ENCODE measurements at regions of chr2 and their contacts with region 1.

Region 1: GRCh38 chr2:29841386-29842004 is 79.9 kb downstream of the ALK start:
- DNase-seq: peak in 3 of 9 donors; percentile 7 to 10 (median 8)
- ATAC-seq: peak; percentile 45
- H3K4me3 ChIP-seq: no peak overlapping the region
- H3K4me3 Mint-ChIP-seq: no peak overlapping the region
- H3K27ac ChIP-seq: no peak overlapping the region
- H3K27ac Mint-ChIP-seq: no peak overlapping the region
- H3K4me1 ChIP-seq: no peaks in the 10 kb centered on the region
- H3K4me1 Mint-ChIP-seq: no peaks in the 10 kb centered on the region
- H3K27me3 ChIP-seq: no peaks in the 10 kb centered on the region
- H3K27me3 Mint-ChIP-seq: peaks cover 3 to 38% (median 33%) of the 10 kb centered on the region in 5 donors

Region 2: GRCh38 chr2:29295857-29296256 is 545.6 kb before region 1 on chr2:
- CTCF ChIA-PET with region 1: no interaction called
- POLR2A ChIA-PET with region 1: no interaction called
- intact Hi-C with region 1: loop called in 1 of 2 experiments (anchors 2 kb)
- DNase-seq: no peak
- ATAC-seq: no peak
- H3K4me3 ChIP-seq: no peak overlapping the region
- H3K4me3 Mint-ChIP-seq: no peak overlapping the region
- H3K27ac ChIP-seq: no peak overlapping the region
- H3K27ac Mint-ChIP-seq: no peak overlapping the region
- H3K4me1 ChIP-seq: no peaks in the 10 kb centered on the region
- H3K4me1 Mint-ChIP-seq: peaks cover 0 to under 1% (median 0%) of the 10 kb centered on the region in 7 donors
- H3K27me3 ChIP-seq: no peaks in the 10 kb centered on the region
- H3K27me3 Mint-ChIP-seq: peaks cover 28 to 64% (median 44%) of the 10 kb centered on the region in 5 donors